Left ventricle myocardium inferior (tissue), 1 donor: ENCODE measurements at regions of chr20 and their contacts with region 1.

Region 1: GRCh38 chr20:44187051-44187762 is at the start of gene JPH2:
- DNase-seq: peak; percentile 76
- H3K4me3 ChIP-seq: peak within 1 kb of the TSS; percentile 72
- H3K27ac ChIP-seq: peak within 1 kb of the TSS; percentile 94
- H3K4me1 ChIP-seq: peaks cover 52% of the 10 kb centered on the region
- H3K27me3 ChIP-seq: peaks cover 3% of the 10 kb centered on the region
- CTCF ChIP-seq: no peak
- total RNA-seq, gene JPH2: 151 TPM

Region 2: DNA sequence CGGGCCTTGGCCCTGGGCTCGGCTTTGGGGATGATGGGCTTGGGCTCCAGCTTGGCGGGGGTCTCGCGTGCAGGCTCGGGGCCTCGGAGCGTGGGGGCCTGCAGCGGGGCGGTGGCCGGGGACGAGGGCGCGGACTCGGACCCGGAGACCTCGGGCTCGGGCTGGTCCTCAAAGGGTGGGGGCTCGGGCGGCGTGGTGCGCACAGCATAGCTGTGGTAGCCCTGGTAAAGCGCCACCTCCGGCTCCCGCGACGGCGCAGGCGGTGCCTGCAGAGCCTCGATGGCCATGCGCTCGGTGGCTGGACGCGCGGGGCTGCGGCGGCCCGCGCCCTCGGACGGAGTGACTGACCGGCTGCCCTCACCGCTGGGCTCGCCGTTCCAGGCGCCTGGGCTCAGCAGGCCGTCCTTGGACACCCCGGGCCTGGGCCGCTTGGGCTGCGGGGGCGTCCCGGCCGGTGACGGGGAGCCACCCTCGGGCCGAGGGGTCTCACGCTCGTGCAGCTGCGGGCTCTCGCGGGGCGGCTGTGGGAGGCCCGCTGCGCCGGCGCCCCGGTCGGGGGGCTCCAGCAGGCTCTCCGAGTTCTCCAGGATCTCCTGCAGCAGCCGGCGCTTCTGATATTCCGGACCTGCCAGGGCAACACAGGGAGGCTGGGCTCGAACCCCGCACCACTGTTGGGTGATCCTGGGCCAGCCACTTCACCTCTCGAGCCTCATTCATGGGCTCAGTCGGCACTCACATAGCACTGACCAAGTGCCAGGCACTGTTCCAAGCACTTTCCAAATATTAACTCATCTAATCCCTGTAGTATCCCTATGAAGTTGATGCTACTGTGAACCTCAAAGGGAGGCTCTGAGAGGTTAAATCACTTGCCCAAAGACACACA is 71.2 kb before region 1 on chr20:
- intact Hi-C with region 1: loop called (anchors 5 kb)
- DNase-seq: no peak
- H3K4me3 ChIP-seq: no peak overlapping the region
- H3K27ac ChIP-seq: peak overlapping the region; percentile 50
- H3K4me1 ChIP-seq: peaks cover 71% of the 10 kb centered on the region
- H3K27me3 ChIP-seq: peaks cover 17% of the 10 kb centered on the region
- CTCF ChIP-seq: no peak

Region 3: GRCh38 chr20:44153636-44154043 is 33.6 kb before region 1 on chr20:
- intact Hi-C with region 1: no loop called
- DNase-seq: no peak
- H3K4me3 ChIP-seq: no peak overlapping the region
- H3K27ac ChIP-seq: peak overlapping the region; percentile 90
- H3K4me1 ChIP-seq: peaks cover 94% of the 10 kb centered on the region
- H3K27me3 ChIP-seq: no peaks in the 10 kb centered on the region
- CTCF ChIP-seq: no peak

Region 4: GRCh38 chr20:44253528-44253927 is 66.3 kb after region 1 on chr20:
- intact Hi-C with region 1: no loop called
- DNase-seq: no peak
- H3K4me3 ChIP-seq: no peak overlapping the region
- H3K27ac ChIP-seq: no peak overlapping the region
- H3K4me1 ChIP-seq: peaks cover 10% of the 10 kb centered on the region
- H3K27me3 ChIP-seq: no peaks in the 10 kb centered on the region
- CTCF ChIP-seq: no peak

Region 5: GRCh38 chr20:44310664-44311639 is 123.7 kb after region 1 on chr20 and contains the start of gene FITM2:
- intact Hi-C with region 1: no loop called
- DNase-seq: peak; percentile 99
- H3K4me3 ChIP-seq: peak within 1 kb of the TSS; percentile 85
- H3K27ac ChIP-seq: peak within 1 kb of the TSS; percentile 91
- H3K4me1 ChIP-seq: peaks cover 56% of the 10 kb centered on the region
- H3K27me3 ChIP-seq: no peaks in the 10 kb centered on the region
- CTCF ChIP-seq: peak; percentile 95
- total RNA-seq, gene FITM2: 160 TPM